ENCODE measurements at regions of chr19 and their contacts with region 1.

Region 1: DNA sequence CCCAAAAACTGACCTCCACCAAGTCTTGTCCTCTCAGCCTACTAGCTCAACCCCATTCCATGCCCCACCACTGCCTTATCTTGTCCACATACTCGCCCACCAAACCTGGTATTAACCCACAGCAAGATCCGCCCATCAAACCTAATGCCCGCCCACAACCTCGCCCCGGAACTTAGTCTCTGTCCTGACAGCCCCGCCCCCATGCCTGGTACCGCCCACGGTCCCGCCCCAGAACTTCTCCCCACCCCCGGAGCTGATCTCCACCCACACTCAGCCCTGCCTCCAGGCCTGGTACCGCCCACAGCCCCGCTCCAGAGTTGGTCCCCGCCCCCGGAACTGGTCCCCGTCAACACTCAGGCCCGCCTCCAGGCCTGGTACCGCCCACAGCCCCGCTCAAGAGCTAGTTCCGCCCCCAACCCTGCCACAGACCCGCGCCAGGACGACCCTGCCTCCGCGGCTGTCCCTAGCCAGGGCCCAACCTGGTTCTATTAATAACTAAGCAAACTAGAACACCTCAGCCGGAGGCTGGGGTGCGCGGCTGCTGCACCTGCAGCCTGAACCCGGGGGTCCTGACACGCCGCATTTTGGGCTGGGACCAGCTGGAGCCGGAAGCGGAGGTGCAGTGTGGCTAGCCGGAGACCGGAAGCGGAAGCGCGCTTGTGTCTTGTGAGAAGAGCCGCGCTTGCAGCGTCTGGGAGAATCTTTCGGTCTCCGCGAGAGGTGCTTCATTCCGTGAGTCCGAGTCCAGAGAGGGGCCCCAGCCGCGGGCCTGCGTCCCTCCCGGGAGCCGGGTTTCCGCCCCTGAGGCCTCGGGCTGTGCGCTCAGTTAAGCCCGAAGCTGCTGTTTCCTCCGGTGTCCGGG is at the start of gene ZNF557:
- DNase-seq: peak; percentile 95
- ATAC-seq: peak; percentile 99
- H3K4me3 Mint-ChIP-seq: peak within 1 kb of the TSS; percentile 93
- H3K27ac Mint-ChIP-seq: peak within 1 kb of the TSS; percentile 92
- H3K4me1 Mint-ChIP-seq: peaks cover 17% of the 10 kb centered on the region
- H3K27me3 Mint-ChIP-seq: no peaks in the 10 kb centered on the region
- CTCF ChIP-seq: no peak
- total RNA-seq, gene ZNF557: 21.8 and 22.6 TPM in 2 replicates

Region 2: GRCh38 chr19:7083076-7083956 is 14.0 kb after region 1 on chr19:
- CTCF ChIA-PET with region 1: no interaction called
- POLR2A ChIA-PET with region 1: interaction called, 11 read pairs
- intact Hi-C with region 1: no loop called
- DNase-seq: no peak
- ATAC-seq: no peak
- H3K4me3 Mint-ChIP-seq: no peak overlapping the region
- H3K27ac Mint-ChIP-seq: no peak overlapping the region
- H3K4me1 Mint-ChIP-seq: no peaks in the 10 kb centered on the region
- H3K27me3 Mint-ChIP-seq: no peaks in the 10 kb centered on the region
- CTCF ChIP-seq: no peak